Activated CD4-positive, alpha-beta T cell treated with anti-CD3 and anti-CD28 coated beads for 36 hours (primary cell): ENCODE measurements at regions of chr2 and their contacts with region 1.

Region 1: GRCh38 chr2:7437716-7438632 is 520.8 kb downstream of the RNF144A start:
- DNase-seq: peak; percentile 68
- ATAC-seq: peak; percentile 57
- H3K4me3 Mint-ChIP-seq: no peak overlapping the region
- H3K27ac Mint-ChIP-seq: peak overlapping the region; percentile 91
- H3K4me1 Mint-ChIP-seq: peaks cover 64% of the 10 kb centered on the region
- H3K27me3 Mint-ChIP-seq: peaks cover 1% of the 10 kb centered on the region

Region 2: DNA sequence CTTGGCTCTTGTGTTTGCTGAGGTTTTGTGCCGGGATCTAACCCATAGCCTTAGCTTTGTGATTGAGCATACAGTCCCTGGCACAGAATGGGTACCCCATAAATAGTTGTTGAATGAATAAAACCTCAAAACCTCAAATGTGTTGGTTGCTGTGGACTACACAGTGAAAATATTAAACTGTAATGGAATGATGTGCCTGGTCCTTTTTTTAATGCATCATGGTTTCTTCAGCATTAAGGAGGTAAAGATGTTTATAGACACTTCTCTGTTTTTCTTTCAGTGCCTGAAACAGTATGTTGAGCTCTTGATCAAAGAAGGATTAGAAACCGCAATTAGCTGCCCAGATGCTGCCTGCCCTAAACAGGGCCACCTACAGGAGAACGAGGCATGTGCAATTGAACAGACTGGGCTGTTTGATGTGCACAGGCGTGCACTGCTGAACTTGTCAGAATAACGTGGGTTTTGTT is 423.8 kb before region 1 on chr2:
- CTCF ChIA-PET with region 1: no interaction called
- POLR2A ChIA-PET with region 1: no interaction called
- intact Hi-C with region 1: no loop called
- DNase-seq: peak; percentile 43
- ATAC-seq: peak; percentile 39
- H3K4me3 Mint-ChIP-seq: no peak overlapping the region
- H3K27ac Mint-ChIP-seq: peak overlapping the region; percentile 27
- H3K4me1 Mint-ChIP-seq: peaks cover 40% of the 10 kb centered on the region
- H3K27me3 Mint-ChIP-seq: no peaks in the 10 kb centered on the region

Region 3: GRCh38 chr2:7450188-7450832 is 12.3 kb after region 1 on chr2:
- CTCF ChIA-PET with region 1: interaction called, 3 read pairs
- POLR2A ChIA-PET with region 1: interaction called, 4 read pairs
- intact Hi-C with region 1: loop called (anchors 1 kb)
- DNase-seq: peak; percentile 83
- ATAC-seq: peak; percentile 84
- H3K4me3 Mint-ChIP-seq: peak overlapping the region; percentile 36
- H3K27ac Mint-ChIP-seq: peak overlapping the region; percentile 89
- H3K4me1 Mint-ChIP-seq: peaks cover 74% of the 10 kb centered on the region
- H3K27me3 Mint-ChIP-seq: no peaks in the 10 kb centered on the region

Region 4: DNA sequence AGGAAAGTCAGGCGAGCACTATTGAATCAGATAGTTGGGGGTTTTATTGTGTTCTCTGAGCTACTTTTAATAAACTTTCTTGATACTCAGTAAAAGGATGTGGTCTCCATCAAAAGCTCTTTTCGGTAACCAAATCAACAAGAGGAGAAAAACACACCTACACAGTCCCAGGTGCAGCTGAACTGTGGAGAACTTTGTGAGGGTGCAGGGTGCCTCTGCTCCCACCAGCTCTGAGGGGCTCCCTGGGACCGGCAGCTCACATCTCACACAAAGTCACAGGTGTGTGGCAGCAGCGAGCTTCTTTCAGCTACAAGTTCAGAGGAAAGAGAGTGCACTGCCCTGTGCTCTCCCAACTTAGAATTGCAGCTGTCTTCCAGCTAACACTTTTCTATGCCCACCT is 129.7 kb after region 1 on chr2:
- CTCF ChIA-PET with region 1: no interaction called
- POLR2A ChIA-PET with region 1: no interaction called
- intact Hi-C with region 1: loop called in 1 of 2 experiments (anchors 2 kb)
- DNase-seq: peak; percentile 81
- ATAC-seq: peak; percentile 93
- H3K4me3 Mint-ChIP-seq: peak overlapping the region; percentile 9
- H3K27ac Mint-ChIP-seq: peak overlapping the region; percentile 88
- H3K4me1 Mint-ChIP-seq: peaks cover 55% of the 10 kb centered on the region
- H3K27me3 Mint-ChIP-seq: no peaks in the 10 kb centered on the region

Region 5: DNA sequence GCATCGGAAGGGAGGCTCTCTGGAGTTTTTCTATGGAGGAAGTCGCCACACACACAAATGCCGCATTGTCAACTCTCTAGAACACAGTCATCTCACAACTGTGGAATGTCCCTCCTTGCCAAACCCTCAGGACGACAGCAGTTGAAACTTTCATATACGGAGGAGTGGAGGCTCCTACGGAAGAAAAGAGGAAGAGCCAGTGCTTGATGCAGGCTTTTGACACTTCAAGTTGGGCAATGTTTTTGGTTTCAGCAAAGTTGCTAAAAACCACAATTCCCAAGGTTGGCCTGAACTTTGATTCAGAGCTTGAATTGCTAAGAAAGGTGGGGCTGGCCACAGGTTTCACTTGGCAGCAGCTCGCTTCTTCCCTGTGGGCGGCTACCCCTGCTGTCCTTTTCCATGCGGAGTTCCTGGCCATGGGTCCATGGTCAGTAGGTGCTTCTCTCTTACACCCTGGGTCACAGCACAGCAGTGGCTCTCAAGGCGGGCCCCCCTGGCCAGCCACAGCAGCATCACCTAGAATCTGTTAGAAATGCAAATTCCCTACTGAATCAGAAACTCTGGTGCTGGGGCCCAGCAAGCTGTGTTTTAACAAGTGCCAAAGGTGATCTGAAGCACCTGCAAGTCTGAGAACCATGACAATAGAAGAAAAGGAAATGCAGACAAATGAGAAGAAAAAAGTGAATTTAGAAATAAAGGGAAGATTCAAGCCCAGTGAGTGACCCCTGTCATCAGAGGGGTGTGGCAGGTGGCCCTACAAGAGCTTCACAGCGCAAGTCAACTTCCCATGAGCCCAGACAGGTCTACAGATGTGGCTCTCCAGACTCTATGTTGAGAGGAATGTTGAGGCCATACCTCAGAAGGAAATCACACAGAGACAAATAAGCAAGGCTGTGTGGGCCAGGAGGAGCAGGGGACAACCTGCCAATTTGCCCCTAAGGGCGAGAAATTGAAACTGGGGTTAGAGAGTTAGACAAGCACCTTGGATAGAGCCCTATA is 335.7 kb after region 1 on chr2:
- CTCF ChIA-PET with region 1: no interaction called
- POLR2A ChIA-PET with region 1: no interaction called
- intact Hi-C with region 1: loop called in 1 of 2 experiments (anchors 5 kb)
- DNase-seq: peak; percentile 66
- ATAC-seq: peak; percentile 76
- H3K4me3 Mint-ChIP-seq: peak overlapping the region; percentile 11
- H3K27ac Mint-ChIP-seq: peak overlapping the region; percentile 64
- H3K4me1 Mint-ChIP-seq: peaks cover 28% of the 10 kb centered on the region
- H3K27me3 Mint-ChIP-seq: peaks cover 3% of the 10 kb centered on the region

Region 6: DNA sequence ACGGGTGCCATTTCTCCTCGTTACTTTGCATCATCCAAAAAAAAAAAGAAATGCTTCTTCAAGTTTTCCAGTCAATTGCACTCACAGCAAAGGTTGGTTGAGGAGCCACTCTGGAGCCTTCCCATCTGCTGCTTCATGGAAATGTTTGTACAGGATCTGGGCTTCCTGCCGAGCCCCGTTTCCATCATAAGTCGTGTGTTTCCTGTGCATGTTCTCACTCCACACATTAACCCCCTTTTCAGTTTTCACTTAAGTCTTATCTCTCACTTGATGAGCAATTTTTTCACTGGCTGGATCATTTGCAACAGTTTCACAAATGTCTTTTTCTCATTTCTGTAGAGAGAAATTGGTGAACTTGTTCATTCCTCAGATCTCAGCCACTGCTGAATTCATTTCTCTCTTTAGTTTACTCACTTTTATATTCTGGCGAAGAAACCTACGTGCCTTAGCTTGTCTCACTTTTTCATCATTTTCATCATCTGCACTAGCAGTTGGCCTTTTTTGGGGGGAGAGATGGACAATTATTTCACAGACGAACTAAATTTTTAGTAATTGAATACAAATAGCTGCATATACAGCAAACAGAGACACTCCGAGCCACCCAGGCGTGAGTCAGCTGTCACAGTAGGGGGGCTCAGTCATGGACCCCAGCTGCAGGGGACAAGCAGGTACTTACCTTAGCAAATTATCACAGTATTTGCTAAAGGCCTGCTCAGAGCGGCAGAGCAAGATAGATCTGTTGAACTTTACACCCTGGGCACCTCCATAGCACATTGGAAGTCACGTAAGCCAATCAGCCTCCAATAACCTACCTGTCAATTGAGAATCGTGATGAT is 493.0 kb after region 1 on chr2:
- CTCF ChIA-PET with region 1: interaction called, 3 read pairs
- POLR2A ChIA-PET with region 1: no interaction called
- intact Hi-C with region 1: loop called (anchors 1 to 5 kb)
- DNase-seq: peak; percentile 56
- ATAC-seq: peak; percentile 80
- H3K4me3 Mint-ChIP-seq: peak overlapping the region; percentile 0
- H3K27ac Mint-ChIP-seq: peak overlapping the region; percentile 93
- H3K4me1 Mint-ChIP-seq: peaks cover 33% of the 10 kb centered on the region
- H3K27me3 Mint-ChIP-seq: no peaks in the 10 kb centered on the region

Region 7: GRCh38 chr2:8090748-8091700 is 653.0 kb after region 1 on chr2:
- CTCF ChIA-PET with region 1: no interaction called
- POLR2A ChIA-PET with region 1: no interaction called
- intact Hi-C with region 1: loop called in 1 of 2 experiments (anchors 2 kb)
- DNase-seq: peak; percentile 90
- ATAC-seq: peak; percentile 100
- H3K4me3 Mint-ChIP-seq: no peak overlapping the region
- H3K27ac Mint-ChIP-seq: no peak overlapping the region
- H3K4me1 Mint-ChIP-seq: no peaks in the 10 kb centered on the region
- H3K27me3 Mint-ChIP-seq: no peaks in the 10 kb centered on the region